ENCODE measurements at regions of chr16 and their contacts with region 1.

Region 1: DNA sequence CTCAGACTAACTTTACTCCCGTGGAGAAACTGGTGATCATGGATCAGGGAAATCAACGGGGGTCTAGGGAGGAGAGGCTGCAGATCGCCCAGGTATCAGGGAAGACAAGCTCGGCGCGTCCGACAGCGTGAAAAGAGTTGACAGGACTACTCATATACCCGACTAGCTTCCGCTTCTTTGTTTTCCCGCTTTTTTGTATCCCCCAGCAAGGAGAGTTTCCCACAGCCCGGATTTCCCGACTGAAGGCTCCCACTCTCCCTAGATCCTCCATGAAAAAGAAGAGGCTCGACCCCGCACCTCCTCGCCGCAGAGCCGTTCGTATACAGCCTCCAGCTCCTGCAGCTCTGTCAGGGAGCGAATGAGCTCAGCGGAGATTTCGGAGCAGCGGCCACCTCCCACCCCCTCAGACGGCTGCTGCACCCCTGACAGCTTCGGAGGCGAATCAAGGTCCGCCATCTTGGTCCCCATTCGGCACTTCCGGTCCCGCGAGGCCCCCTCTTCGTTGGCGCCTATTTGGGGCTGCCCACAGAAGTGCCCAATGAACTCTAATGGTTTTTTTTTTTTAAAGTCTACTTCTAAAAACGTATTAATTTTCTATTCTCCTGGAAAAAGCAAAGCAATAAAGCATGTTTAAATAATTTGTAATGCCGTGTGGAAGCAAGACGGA is at the start of gene COG4:
- DNase-seq: peak; percentile 94
- ATAC-seq: peak; percentile 91
- total RNA-seq, gene COG4: 46.5 TPM

Region 2: GRCh38 chr16:70298988-70299938 is 223.9 kb before region 1 on chr16 and contains the start of gene DDX19B:
- intact Hi-C with region 1: no loop called
- DNase-seq: peak; percentile 92
- ATAC-seq: peak; percentile 94
- total RNA-seq, gene DDX19B: 14.1 TPM

Region 3: DNA sequence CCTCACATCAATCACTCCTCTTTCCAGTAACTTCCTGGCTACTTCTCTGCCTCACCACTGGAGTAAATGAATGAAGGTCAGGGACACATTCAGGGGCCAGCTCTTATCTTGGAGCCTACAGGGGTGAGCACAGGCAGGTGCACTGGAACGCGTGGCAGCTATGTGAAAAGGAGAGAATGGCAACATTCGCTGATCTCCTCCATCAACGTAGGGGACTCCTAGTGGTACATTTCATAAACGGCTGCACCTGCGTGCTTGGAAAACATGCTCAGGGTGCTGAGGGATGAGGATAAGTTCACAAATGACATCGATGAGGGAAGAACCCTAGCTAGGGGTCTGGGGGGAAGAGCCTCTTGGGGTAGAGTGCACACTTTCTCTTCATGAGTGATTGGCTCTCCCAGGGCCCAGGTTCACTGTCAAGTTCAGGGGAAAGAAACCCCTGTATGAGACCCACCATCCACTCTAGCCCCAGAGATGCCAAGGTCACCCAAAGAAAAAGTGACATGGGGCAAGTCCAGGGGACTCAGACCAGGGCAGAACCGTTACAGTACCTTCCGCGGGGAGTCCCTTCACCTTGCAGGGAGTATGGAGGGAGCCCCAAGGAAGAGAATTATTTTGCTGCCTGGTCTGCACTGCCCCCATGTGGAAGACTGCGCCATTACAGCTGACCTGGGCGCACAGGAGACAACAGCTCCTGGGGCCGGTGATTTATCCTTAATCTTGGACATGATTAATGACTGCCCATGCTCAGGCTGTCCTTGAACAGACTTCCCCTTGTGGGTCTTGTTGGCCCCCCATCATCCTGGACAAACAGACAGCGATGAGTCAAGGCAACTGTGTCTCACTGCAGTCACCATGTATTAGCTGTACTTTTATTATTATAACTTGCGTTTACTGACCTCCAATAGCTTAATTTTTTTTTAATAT is 247.7 kb after region 1 on chr16:
- intact Hi-C with region 1: loop called (anchors 5 kb)
- DNase-seq: no peak
- ATAC-seq: peak; percentile 68